Panc1 (cell line): ENCODE measurements at regions of chr2 and their contacts with region 1.

Region 1: GRCh38 chr2:138827426-138828054 is 47.4 kb upstream of the NXPH2 start:
- DNase-seq: no peak
- ATAC-seq: peak; percentile 77
- H3K4me3 ChIP-seq: no peak overlapping the region
- H3K27ac ChIP-seq: no peak overlapping the region
- H3K4me1 ChIP-seq: no peaks in the 10 kb centered on the region; the same call in 1 of the 2 replicates
- H3K27me3 ChIP-seq: no peaks in the 10 kb centered on the region; the same call in 1 of the 2 replicates
- CTCF ChIP-seq: peak; percentile 78

Region 2: GRCh38 chr2:137865954-137866540 is 961.5 kb before region 1 on chr2:
- CTCF ChIA-PET with region 1: interaction called, 5 read pairs
- POLR2A ChIA-PET with region 1: no interaction called
- in situ Hi-C with region 1: no loop called
- intact Hi-C with region 1: loop called (anchors 2 kb)
- DNase-seq: peak; percentile 27
- ATAC-seq: peak; percentile 88
- H3K4me3 ChIP-seq: no peak overlapping the region
- H3K27ac ChIP-seq: no peak overlapping the region
- H3K4me1 ChIP-seq: no peaks in the 10 kb centered on the region
- H3K27me3 ChIP-seq: no peaks in the 10 kb centered on the region
- CTCF ChIP-seq: peak; percentile 84

Region 3: DNA sequence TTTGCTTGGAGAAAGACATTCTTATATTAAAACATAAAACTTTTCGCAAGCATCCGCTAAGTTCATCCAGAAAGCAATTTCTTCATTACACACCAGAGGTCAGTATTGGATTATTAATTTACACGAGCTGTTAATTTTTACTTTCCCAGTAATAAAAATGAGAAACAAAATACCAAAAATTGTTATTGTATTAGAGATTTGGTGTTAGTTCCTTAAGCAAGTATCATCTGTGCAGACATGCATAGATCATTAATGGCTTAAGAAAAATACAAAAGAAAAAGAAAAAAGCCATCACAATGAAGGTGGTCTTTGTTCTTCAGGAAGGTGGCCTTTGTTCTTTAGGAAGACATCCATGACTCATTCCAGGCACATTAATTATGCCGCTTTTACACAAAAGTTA is 916.9 kb before region 1 on chr2:
- CTCF ChIA-PET with region 1: interaction called, 5 read pairs
- POLR2A ChIA-PET with region 1: no interaction called
- in situ Hi-C with region 1: no loop called
- intact Hi-C with region 1: loop called (anchors 1 kb)
- DNase-seq: no peak
- ATAC-seq: no peak
- H3K4me3 ChIP-seq: no peak overlapping the region
- H3K27ac ChIP-seq: no peak overlapping the region
- H3K4me1 ChIP-seq: no peaks in the 10 kb centered on the region
- H3K27me3 ChIP-seq: no peaks in the 10 kb centered on the region
- CTCF ChIP-seq: peak; percentile 57; the same call in 1 of the 2 replicates

Region 4: GRCh38 chr2:138615257-138615656 is 212.3 kb before region 1 on chr2:
- CTCF ChIA-PET with region 1: no interaction called
- POLR2A ChIA-PET with region 1: no interaction called
- in situ Hi-C with region 1: no loop called
- intact Hi-C with region 1: no loop called
- DNase-seq: no peak
- ATAC-seq: peak; percentile 79
- H3K4me3 ChIP-seq: no peak overlapping the region
- H3K27ac ChIP-seq: no peak overlapping the region
- H3K4me1 ChIP-seq: no peaks in the 10 kb centered on the region
- H3K27me3 ChIP-seq: no peaks in the 10 kb centered on the region; the same call in 1 of the 2 replicates
- CTCF ChIP-seq: no peak

Region 5: DNA sequence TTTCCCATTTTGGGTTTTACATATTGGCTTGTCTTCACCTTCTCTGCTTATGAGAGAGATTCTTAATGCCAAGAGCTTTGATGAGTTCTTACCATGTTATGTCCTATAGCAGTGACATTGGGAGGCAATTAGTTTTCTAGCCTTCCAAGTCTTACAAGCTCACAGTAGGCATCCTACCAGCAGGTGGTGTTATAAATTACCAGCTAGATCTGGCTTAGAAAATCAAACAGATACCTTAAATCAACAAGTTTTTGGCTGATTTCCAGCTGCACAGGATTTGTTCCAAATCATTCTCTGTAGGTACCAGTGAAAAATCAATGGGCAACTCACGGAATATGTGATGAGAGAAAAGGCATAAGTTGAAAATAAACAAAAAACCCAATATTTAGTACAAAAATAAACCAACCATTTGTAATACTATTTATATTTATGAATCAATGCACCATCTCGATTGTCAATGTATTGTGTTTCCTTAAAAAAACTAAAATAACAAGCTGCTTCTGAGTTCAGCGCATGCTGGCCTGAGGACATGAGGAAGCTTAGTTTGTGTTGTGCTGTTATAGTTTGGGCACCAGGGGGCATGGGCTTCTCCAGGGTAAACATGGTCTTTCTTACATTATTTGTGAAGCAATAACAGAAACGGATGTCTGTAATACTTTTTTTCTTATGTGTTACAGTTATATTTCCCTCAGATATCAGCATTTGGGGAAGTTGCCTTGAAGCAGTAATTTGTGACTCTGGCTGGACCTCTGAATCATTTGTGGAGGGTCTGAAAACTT is 13.2 kb before region 1 on chr2:
- CTCF ChIA-PET with region 1: no interaction called
- POLR2A ChIA-PET with region 1: no interaction called
- in situ Hi-C with region 1: no loop called
- intact Hi-C with region 1: no loop called
- DNase-seq: no peak
- ATAC-seq: no peak
- H3K4me3 ChIP-seq: no peak overlapping the region
- H3K27ac ChIP-seq: no peak overlapping the region
- H3K4me1 ChIP-seq: no peaks in the 10 kb centered on the region
- H3K27me3 ChIP-seq: no peaks in the 10 kb centered on the region; the same call in 1 of the 2 replicates
- CTCF ChIP-seq: peak; percentile 26